Head of caudate nucleus (tissue), 42 donors: ENCODE measurements at regions of chr7 and their contacts with region 1.

Region 1: DNA sequence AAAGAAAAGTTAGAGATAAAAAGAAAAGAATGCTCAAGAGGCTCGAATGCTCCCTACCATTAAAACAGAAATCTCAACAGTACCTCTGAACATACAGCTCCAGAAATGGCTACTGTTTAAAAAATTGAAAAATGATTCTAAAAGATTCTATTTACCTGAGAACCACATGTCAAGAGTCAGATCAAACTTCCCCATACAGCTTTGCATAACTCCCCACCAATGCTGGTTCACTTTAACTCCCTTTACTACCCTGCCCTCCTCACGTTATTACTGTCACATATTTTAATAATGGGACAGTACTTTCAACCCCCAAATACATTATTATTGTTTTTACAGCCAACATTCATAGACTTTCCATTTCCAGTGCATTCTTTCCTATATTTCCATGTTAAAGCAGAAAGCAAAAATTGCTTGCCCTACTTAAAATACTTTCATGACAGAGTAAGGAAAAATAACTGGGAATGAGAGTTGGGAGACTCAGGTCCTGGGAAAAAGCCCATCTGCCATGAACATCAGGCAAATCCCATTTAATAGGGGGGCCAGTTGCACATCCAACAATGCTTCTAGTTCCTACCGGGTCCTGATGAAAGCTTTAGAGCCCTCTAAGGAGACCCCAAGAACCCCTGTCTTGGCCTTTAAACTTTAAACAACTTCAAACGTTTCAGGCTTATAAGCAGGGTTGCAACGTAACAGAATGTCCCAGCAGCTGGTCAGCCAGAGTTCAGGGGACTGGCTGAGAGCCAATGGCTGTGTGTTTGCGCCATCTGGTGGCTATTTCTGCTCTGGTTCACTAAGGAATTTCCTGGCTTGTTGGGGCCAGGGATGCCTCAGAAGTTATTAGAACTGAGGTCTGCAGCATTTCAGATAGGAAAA is 247.4 kb downstream of the ELMO1 start:
- DNase-seq: peak; percentile 63 to 94 (median 83)

Region 2: DNA sequence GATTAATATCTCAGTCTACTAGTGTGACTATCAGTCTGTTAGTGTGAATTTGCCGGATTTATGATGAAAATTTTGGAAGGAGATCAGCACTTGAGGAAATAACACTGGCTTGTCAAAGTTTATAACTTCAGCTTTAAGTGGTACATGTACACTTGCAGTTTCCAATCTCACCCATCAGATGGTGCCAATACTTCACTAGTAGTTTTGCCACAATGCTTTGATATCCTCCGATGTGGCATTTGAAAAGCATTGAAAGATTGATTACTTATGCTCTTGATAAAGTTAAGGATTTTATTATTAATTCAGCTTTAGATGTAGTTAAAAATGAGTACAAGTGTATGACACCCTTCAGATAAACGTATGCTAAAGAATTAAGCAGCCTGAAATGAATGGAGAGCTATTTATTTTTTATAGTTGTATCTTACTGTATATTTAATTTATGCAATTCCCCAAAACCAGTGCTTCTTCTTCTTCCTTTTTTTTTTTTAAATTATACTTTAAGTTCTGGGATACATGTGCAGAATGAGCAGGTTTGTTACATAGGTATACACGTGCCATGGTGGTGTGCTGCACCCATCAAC is 713.4 kb before region 1 on chr7:
- intact Hi-C with region 1: loop called (anchors 5 kb)
- DNase-seq: peak in 18 of 42 donors; percentile 20 to 80 (median 56)

Region 3: GRCh38 chr7:36986429-36987362 is 214.5 kb before region 1 on chr7:
- intact Hi-C with region 1: loop called (anchors 5 kb)
- DNase-seq: peak; percentile 59 to 92 (median 83)

Region 4: GRCh38 chr7:37448636-37449361 is 247.6 kb after region 1 on chr7 and contains the start of gene ELMO1:
- intact Hi-C with region 1: loop called (anchors 10 kb)
- DNase-seq: peak; percentile 44 to 87 (median 73)

Region 5: DNA sequence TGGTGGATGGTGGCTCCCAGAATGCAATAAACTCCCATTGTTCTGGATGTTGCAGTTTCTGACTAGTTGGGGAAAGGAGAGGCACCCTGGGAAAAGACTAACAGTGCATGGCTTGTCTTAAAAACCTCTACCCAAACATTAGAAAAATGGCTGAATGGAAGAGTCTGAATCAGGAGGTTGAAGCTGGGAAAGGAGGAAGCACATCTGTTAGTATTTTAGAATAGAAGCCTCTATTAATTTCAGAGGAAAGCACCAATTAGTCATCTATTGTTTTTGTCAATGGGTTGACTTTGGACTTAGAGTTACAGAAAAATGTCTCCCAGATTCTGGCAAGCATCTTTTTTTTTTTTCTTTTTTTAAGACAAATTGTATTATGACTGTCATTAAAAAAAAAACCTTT is 303.6 kb after region 1 on chr7:
- intact Hi-C with region 1: loop called (anchors 10 kb)
- DNase-seq: peak in 3 of 42 donors; percentile 41 to 45 (median 45)